BJ (cell line): ENCODE measurements at regions of chr4 and their contacts with region 1.

Region 1: DNA sequence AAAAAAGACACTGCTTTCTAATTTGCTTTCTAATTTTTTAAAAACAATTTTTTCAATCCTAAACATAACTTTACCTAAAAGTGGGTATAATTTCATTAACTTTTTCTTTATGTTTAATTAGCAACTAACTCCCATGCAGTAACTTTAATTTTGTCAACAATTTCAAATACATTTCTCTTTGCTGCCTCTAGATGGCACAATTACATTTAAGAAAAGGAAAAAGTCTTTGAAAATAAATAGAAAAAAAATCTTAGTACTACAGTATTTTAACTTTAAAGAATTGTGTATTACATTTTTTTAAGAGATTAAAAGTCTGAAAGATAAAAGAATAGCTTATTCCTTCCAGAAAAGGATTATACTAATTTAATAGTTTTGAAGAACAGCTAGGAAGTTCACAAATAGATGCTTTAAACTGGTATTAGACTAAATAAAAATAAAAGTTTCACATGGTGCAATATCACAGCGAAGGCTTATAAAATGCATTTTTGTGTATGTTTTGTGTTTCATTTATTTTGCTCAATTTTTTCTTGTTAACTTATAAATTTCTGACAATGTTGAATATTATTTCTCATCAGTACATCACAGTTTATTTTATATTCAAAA is 105.1 kb downstream of the ADGRA3 start:
- DNase-seq: no peak
- H3K4me3 ChIP-seq: no peak overlapping the region
- H3K27me3 ChIP-seq: no peaks in the 10 kb centered on the region
- CTCF ChIP-seq: peak; percentile 46

Region 2: DNA sequence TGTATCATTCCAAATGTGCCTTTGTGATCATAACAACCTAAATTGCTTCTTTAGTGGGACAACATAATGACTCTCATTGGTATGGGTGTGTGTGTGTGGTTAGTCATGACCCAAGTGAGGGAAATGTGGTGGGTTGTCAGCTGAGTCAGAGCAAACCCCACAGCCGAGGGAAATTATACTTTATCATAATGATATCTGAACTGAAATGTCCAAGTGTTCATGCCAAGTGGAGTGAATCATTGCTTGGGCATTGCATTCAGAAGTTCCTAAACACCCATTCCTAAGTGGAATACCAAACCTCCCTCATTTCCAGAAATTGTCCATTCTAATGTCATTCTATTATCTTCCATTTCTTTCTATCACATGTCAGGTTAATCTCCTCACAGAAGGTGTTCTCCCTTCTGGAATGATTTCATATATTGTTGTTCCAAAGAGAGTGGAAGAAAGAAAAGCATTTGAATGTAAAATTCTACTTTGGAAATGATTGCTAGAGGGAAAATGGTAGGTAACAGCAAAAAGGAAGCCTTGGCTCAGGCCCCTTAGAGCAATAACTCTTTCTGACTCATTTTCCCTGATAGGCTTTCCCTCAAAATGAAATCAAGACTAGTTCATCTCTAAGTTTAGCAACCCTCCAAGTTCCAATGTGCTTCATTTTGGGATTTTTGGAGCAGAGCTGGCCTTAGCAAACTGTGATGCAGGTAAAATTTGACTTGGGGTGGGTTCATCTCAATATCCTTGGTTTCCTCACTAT is 231.4 kb before region 1 on chr4:
- CTCF ChIA-PET with region 1: no interaction called
- POLR2A ChIA-PET with region 1: no interaction called
- DNase-seq: peak; percentile 44
- H3K4me3 ChIP-seq: no peak overlapping the region
- H3K27me3 ChIP-seq: no peaks in the 10 kb centered on the region
- CTCF ChIP-seq: no peak

Region 3: GRCh38 chr4:22607382-22607781 is 196.6 kb after region 1 on chr4:
- CTCF ChIA-PET with region 1: interaction called, 33 read pairs
- POLR2A ChIA-PET with region 1: no interaction called
- DNase-seq: no peak
- H3K4me3 ChIP-seq: no peak overlapping the region
- H3K27me3 ChIP-seq: no peaks in the 10 kb centered on the region
- CTCF ChIP-seq: peak; percentile 68

Region 4: GRCh38 chr4:22692736-22693135 is 282.0 kb after region 1 on chr4 and contains the start of gene GBA3:
- CTCF ChIA-PET with region 1: interaction called, 20 read pairs
- POLR2A ChIA-PET with region 1: no interaction called
- DNase-seq: no peak
- H3K4me3 ChIP-seq: no peak within 1 kb of the TSS
- H3K27me3 ChIP-seq: no peaks in the 10 kb centered on the region; the same call in 1 of the 2 replicates
- CTCF ChIP-seq: no peak
- polyA plus RNA-seq, gene GBA3: not detected in 2 replicates